ENCODE measurements at regions of chr10 and their contacts with region 1.

Region 1: DNA sequence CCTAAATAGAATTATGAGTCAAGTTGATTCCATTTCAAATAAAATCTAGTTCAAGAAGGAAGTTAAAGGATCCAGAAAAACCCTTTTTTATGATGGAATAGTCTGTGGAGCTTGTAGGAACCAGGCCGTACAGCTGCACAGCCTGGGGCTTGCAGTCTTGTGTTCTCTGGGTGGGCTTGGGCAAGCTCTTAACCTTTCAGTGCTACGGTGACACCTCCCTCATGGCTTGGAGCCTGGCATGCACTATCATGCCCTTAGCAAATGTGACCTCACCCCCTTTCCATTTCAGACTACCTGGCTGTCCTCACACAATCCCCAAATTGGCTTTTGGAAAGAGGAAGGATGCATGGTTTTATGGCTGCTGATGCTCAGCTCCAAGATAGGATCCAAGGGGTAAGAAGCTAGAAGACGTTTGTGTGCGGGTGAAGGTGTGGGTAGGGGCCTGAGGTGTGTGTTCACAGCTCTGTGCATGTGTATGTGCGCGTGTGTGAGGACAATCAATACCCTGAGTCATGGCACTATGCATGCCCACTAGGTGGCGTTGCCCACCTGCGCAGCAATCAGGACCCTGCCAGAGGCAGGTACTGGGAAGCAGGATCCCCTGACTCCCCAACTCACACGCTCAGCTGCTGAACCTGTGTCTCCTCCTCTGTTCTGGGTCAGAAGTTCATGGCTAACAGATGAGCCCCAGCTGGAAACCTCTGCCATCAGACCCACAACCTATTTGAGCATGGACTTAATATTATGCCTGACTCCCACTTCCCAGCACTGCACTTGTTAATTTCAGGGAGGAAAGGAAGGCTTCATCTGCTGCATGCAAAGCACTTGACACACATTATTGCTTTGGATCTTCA is 113.4 kb downstream of the PTPN20 start:
- DNase-seq: peak; percentile 79
- H3K4me3 Mint-ChIP-seq: no peak overlapping the region
- H3K27ac Mint-ChIP-seq: no peak overlapping the region
- H3K4me1 Mint-ChIP-seq: no peaks in the 10 kb centered on the region
- H3K27me3 Mint-ChIP-seq: peaks cover 5% of the 10 kb centered on the region

Region 2: DNA sequence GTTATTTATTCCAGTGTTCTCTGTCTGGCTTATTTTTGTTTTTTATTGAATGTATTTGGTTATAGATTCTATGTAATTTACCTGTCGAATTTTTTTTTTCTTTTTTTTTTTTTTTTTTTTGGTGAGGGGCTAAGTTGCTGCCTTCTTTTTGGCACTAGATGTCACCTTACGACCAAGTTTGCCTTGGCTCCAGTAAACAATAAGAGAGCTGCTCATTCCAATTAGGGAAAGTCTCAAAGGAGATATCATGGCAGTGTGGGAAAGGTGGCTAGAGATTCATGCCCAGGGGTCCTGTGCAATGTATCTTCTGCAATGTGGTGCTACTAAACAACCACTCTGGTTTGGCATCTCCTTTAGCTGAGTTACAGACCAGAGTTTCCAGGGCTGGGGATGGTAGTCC is 29.4 kb before region 1 on chr10:
- CTCF ChIA-PET with region 1: interaction called, 11 read pairs
- POLR2A ChIA-PET with region 1: no interaction called
- intact Hi-C with region 1: no loop called
- DNase-seq: no peak
- H3K4me3 Mint-ChIP-seq: no peak overlapping the region
- H3K27ac Mint-ChIP-seq: no peak overlapping the region
- H3K4me1 Mint-ChIP-seq: no peaks in the 10 kb centered on the region
- H3K27me3 Mint-ChIP-seq: peaks cover 12% of the 10 kb centered on the region

Region 3: GRCh38 chr10:47013507-47014154 is 11.0 kb before region 1 on chr10:
- CTCF ChIA-PET with region 1: interaction called, 10 read pairs
- POLR2A ChIA-PET with region 1: no interaction called
- intact Hi-C with region 1: no loop called
- DNase-seq: no peak
- H3K4me3 Mint-ChIP-seq: no peak overlapping the region
- H3K27ac Mint-ChIP-seq: no peak overlapping the region
- H3K4me1 Mint-ChIP-seq: no peaks in the 10 kb centered on the region
- H3K27me3 Mint-ChIP-seq: peaks cover 9% of the 10 kb centered on the region

Region 4: DNA sequence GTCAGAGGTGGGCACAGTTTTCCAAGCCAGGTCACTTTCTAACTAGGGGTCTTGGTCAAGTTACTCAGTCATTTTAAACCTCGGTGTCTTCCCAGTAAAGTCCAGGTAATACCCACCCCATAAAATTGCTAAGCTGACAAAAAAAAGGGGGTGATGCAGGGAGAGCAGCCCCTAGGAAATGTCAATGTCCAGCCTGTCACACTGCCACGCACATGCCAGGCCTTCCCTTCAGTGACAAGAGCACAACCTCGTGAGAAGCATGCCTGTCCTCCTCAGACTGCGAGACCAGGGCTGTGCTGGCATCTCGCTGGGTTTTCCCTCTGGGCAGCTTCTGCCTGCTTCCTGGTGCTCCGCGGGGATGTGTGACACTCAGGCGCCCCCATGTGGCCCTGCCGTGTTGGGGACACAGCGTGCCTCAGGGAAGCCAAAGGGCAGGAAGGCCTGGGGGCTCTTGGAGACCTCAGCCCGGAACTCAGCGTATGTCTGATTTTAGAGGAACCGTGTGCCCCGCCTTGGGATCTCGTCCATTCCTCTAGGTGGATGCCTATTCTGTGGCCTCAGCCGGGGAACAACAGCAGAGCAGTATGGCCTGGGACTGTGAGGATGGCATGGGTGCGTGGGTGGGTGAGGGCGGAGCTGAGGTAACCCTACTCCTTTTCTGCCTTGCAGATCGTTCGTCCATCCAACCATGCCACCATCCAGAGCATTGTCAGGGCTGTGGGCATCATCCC is 287.5 kb after region 1 on chr10:
- CTCF ChIA-PET with region 1: interaction called, 85 read pairs
- POLR2A ChIA-PET with region 1: no interaction called
- intact Hi-C with region 1: loop called (anchors 1 kb)
- DNase-seq: peak; percentile 91
- H3K4me3 Mint-ChIP-seq: no peak overlapping the region
- H3K27ac Mint-ChIP-seq: peak overlapping the region; percentile 51
- H3K4me1 Mint-ChIP-seq: peaks cover 22% of the 10 kb centered on the region
- H3K27me3 Mint-ChIP-seq: no peaks in the 10 kb centered on the region

Region 5: GRCh38 chr10:47340608-47341170 is 316.1 kb after region 1 on chr10:
- CTCF ChIA-PET with region 1: interaction called, 21 read pairs
- POLR2A ChIA-PET with region 1: no interaction called
- intact Hi-C with region 1: loop called (anchors 1 kb)
- DNase-seq: peak; percentile 79
- H3K4me3 Mint-ChIP-seq: no peak overlapping the region
- H3K27ac Mint-ChIP-seq: no peak overlapping the region
- H3K4me1 Mint-ChIP-seq: no peaks in the 10 kb centered on the region
- H3K27me3 Mint-ChIP-seq: peaks cover 5% of the 10 kb centered on the region